ENCODE measurements at regions of chr5 and their contacts with region 1.

Region 1: GRCh38 chr5:150022163-150022540 is 21.6 kb downstream of the HMGXB3 start:
- DNase-seq: peak; percentile 97
- H3K4me3 ChIP-seq: peak overlapping the region in 1 of 3 experiments; percentile 46
- H3K27ac ChIP-seq: peak overlapping the region; percentile 92
- H3K4me1 ChIP-seq: peaks cover 43% of the 10 kb centered on the region
- H3K27me3 ChIP-seq: no peaks in the 10 kb centered on the region
- CTCF ChIP-seq: no peak
- POLR2A ChIP-seq: peak; percentile 14

Region 2: DNA sequence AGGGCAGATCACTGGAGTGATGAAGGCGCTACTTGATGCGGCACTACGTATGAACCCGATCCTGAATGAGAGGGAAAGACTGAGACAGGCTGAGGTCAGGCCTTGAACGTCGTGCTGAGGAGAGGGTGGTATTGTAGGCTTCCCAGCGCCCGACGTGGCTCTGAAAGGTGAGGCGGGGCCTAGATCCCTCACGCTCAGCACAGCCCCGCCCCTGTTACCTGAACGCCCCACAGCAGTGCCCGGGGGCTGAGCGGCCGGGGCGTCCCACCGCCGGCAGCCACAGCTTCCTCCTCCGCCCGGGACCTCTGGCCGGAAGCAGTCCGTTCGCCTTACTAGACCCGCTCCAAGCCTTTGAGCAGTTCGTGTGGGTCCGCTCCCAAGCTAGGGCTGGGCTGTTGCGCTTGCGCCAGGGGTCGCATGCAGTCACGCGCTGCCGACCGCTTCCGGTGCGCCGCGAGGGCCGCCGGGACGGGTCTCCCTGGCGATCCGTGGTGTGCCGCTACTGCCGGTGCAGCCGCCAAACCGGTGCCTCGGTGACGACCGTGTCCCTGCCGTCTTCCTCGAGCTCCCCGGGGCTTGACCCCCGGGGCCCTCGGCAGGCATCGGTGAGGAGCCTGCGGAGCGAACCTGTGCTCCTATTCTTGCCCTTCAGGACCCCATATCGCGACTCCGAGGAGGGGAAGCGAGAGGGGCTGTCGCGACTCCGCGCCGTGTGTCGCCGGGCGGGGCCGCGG is 21.7 kb before region 1 on chr5 and contains the starts of genes HMGXB3 and TIGD6:
- CTCF ChIA-PET with region 1: interaction called, 16 read pairs
- POLR2A ChIA-PET with region 1: interaction called, 14 read pairs
- dilution Hi-C with region 1: no loop called
- intact Hi-C with region 1: loop called (anchors 1 kb)
- DNase-seq: peak; percentile 94
- H3K4me3 ChIP-seq: peak within 1 kb of the TSS; percentile 42 to 97 (median 86)
- H3K27ac ChIP-seq: peak within 1 kb of the TSS; percentile 72
- H3K4me1 ChIP-seq: peaks cover 23% of the 10 kb centered on the region
- H3K27me3 ChIP-seq: no peaks in the 10 kb centered on the region
- CTCF ChIP-seq: peak in 1 of 2 donors; percentile 8
- POLR2A ChIP-seq: peak; percentile 96
- total RNA-seq, gene HMGXB3: 43.0 and 52.6 TPM in 2 replicates
- total RNA-seq, gene TIGD6: 3.6 and 4.1 TPM in 2 replicates

Region 3: DNA sequence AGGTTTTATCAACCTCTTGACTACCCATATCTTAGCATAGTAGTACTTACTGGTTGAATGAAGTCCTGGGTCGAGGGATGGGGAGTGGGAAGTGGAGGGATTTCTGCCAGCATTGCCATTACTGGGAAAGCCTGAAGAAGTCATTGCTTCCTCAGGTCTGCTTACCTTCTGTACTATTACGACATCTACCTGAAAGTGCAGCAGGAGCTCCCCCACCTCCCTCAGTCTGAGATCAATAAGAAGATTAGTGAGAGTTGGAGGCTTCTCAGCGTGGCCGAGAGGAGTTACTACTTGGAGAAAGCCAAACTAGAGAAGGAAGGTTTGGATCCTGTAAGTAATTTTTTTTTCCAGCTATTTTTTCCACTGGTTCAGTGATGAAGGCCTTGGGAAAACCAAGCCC is 15.8 kb before region 1 on chr5:
- CTCF ChIA-PET with region 1: interaction called, 16 read pairs
- POLR2A ChIA-PET with region 1: interaction called, 8 read pairs
- dilution Hi-C with region 1: no loop called
- intact Hi-C with region 1: loop called (anchors 1 kb)
- DNase-seq: no peak
- H3K4me3 ChIP-seq: no peak overlapping the region
- H3K27ac ChIP-seq: no peak overlapping the region
- H3K4me1 ChIP-seq: peaks cover 14% of the 10 kb centered on the region
- H3K27me3 ChIP-seq: no peaks in the 10 kb centered on the region
- CTCF ChIP-seq: no peak
- POLR2A ChIP-seq: no peak

Region 4: GRCh38 chr5:150044329-150044681 is 22.2 kb after region 1 on chr5:
- CTCF ChIA-PET with region 1: interaction called, 3 read pairs
- POLR2A ChIA-PET with region 1: interaction called, 3 read pairs
- dilution Hi-C with region 1: no loop called
- intact Hi-C with region 1: loop called (anchors 1 kb)
- DNase-seq: peak; percentile 83
- H3K4me3 ChIP-seq: no peak overlapping the region
- H3K27ac ChIP-seq: peak overlapping the region; percentile 58
- H3K4me1 ChIP-seq: peaks cover 21% of the 10 kb centered on the region
- H3K27me3 ChIP-seq: no peaks in the 10 kb centered on the region
- CTCF ChIP-seq: no peak
- POLR2A ChIP-seq: no peak

Region 5: GRCh38 chr5:150052956-150053712 is 31.0 kb after region 1 on chr5:
- CTCF ChIA-PET with region 1: interaction called, 4 read pairs
- POLR2A ChIA-PET with region 1: interaction called, 3 read pairs
- dilution Hi-C with region 1: no loop called
- intact Hi-C with region 1: loop called (anchors 1 kb)
- DNase-seq: peak; percentile 16
- H3K4me3 ChIP-seq: no peak overlapping the region
- H3K27ac ChIP-seq: peak overlapping the region; percentile 28
- H3K4me1 ChIP-seq: peaks cover 31% of the 10 kb centered on the region
- H3K27me3 ChIP-seq: no peaks in the 10 kb centered on the region
- CTCF ChIP-seq: no peak
- POLR2A ChIP-seq: no peak

Region 6: DNA sequence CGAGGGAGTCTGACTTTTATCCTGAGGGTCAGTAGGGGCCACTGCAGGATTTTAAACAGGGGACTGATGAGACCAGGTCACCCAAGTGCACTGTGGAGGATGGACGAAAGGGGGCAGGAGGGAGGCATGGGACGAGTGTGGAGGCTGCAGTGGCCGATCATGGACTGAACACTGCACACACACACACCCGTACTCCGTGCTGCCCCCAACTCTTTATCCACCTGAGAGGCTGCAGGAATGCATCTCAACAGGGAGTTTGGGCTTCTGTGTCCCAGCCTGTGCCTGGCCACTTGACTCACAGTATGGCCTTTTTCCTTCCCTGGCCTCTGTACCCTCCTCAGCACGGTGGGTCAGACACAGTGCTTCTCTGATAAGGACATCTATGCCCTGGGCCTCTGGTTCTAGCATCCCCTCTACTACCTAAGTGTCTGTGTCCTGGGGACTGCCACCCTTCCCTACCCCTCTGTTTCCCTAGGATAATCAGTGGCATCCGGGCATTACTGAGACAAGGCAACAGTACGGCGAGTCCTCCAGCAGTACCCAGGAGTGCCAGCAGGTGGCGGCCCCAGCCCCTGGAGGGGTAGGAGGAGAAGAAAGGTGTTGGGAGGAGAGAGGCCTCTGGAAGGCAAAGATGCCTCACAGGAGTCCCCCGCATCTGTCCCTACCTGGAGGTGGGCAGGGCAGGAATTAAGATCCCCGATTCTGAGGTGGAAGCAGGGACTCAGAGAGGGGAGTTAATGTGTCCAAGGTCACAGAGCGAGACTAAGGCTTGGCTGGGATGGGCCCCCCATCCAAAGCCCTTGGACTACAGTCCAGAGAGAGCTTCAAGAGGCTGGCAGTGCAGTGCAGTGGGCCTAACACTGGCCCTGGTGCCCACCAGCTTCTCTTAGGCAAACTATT is 139.3 kb after region 1 on chr5:
- CTCF ChIA-PET with region 1: no interaction called
- POLR2A ChIA-PET with region 1: no interaction called
- dilution Hi-C with region 1: no loop called
- intact Hi-C with region 1: no loop called
- DNase-seq: peak; percentile 59
- H3K4me3 ChIP-seq: no peak overlapping the region
- H3K27ac ChIP-seq: no peak overlapping the region
- H3K4me1 ChIP-seq: no peaks in the 10 kb centered on the region
- H3K27me3 ChIP-seq: peaks cover 6 to 7% of the 10 kb centered on the region in 2 experiments
- CTCF ChIP-seq: peak; percentile 94 to 97
- POLR2A ChIP-seq: no peak

Region 7: GRCh38 chr5:150184990-150185912 is 163.1 kb after region 1 on chr5:
- CTCF ChIA-PET with region 1: no interaction called
- POLR2A ChIA-PET with region 1: no interaction called
- dilution Hi-C with region 1: no loop called
- intact Hi-C with region 1: no loop called
- DNase-seq: no peak
- H3K4me3 ChIP-seq: no peak overlapping the region
- H3K27ac ChIP-seq: no peak overlapping the region
- H3K4me1 ChIP-seq: no peaks in the 10 kb centered on the region
- H3K27me3 ChIP-seq: peaks cover 27 to 41% of the 10 kb centered on the region in 2 experiments
- CTCF ChIP-seq: no peak
- POLR2A ChIP-seq: no peak

Measured in endothelial cell of umbilical vein (primary cell).